HepG2 (cell line): ENCODE measurements at regions of chr4 and their contacts with region 1.

Region 1: GRCh38 chr4:54233277-54233696 is 4.2 kb downstream of the PDGFRA start:
- DNase-seq: peak; percentile 55
- ATAC-seq: peak; percentile 94
- H3K4me3 ChIP-seq: peak overlapping the region; percentile 45 to 75 (median 52); a peak in 5 of 6 replicates
- H3K27ac ChIP-seq: no peak overlapping the region
- H3K4me1 ChIP-seq: peaks cover 30% of the 10 kb centered on the region; the same call in 1 of the 2 replicates
- H3K27me3 ChIP-seq: peaks cover 14 to 45% of the 10 kb centered on the region in 2 experiments
- CTCF ChIP-seq: peak; percentile 93
- EP300 ChIP-seq: no peak
- POLR2A ChIP-seq: no peak
- RAD21 ChIP-seq: peak; percentile 97

Region 2: GRCh38 chr4:53313510-53313909 is 919.8 kb before region 1 on chr4:
- CTCF ChIA-PET with region 1: no interaction called
- POLR2A ChIA-PET with region 1: no interaction called
- in situ Hi-C with region 1: loop called (anchors 25 kb)
- intact Hi-C with region 1: no loop called
- DNase-seq: peak; percentile 43
- ATAC-seq: peak; percentile 86
- H3K4me3 ChIP-seq: no peak overlapping the region
- H3K27ac ChIP-seq: no peak overlapping the region
- H3K4me1 ChIP-seq: no peaks in the 10 kb centered on the region
- H3K27me3 ChIP-seq: no peaks in the 10 kb centered on the region
- CTCF ChIP-seq: peak; percentile 62
- EP300 ChIP-seq: no peak
- POLR2A ChIP-seq: no peak
- RAD21 ChIP-seq: no peak

Region 3: GRCh38 chr4:53490965-53491622 is 742.2 kb before region 1 on chr4:
- CTCF ChIA-PET with region 1: interaction called, 17 read pairs
- POLR2A ChIA-PET with region 1: no interaction called
- in situ Hi-C with region 1: loop called (anchors 25 kb)
- intact Hi-C with region 1: loop called (anchors 5 kb)
- DNase-seq: peak; percentile 40
- ATAC-seq: peak; percentile 75
- H3K4me3 ChIP-seq: no peak overlapping the region
- H3K27ac ChIP-seq: no peak overlapping the region
- H3K4me1 ChIP-seq: no peaks in the 10 kb centered on the region
- H3K27me3 ChIP-seq: no peaks in the 10 kb centered on the region; a peak in 1 of 5 replicates
- CTCF ChIP-seq: peak; percentile 59
- EP300 ChIP-seq: no peak
- POLR2A ChIP-seq: no peak
- RAD21 ChIP-seq: no peak

Region 4: DNA sequence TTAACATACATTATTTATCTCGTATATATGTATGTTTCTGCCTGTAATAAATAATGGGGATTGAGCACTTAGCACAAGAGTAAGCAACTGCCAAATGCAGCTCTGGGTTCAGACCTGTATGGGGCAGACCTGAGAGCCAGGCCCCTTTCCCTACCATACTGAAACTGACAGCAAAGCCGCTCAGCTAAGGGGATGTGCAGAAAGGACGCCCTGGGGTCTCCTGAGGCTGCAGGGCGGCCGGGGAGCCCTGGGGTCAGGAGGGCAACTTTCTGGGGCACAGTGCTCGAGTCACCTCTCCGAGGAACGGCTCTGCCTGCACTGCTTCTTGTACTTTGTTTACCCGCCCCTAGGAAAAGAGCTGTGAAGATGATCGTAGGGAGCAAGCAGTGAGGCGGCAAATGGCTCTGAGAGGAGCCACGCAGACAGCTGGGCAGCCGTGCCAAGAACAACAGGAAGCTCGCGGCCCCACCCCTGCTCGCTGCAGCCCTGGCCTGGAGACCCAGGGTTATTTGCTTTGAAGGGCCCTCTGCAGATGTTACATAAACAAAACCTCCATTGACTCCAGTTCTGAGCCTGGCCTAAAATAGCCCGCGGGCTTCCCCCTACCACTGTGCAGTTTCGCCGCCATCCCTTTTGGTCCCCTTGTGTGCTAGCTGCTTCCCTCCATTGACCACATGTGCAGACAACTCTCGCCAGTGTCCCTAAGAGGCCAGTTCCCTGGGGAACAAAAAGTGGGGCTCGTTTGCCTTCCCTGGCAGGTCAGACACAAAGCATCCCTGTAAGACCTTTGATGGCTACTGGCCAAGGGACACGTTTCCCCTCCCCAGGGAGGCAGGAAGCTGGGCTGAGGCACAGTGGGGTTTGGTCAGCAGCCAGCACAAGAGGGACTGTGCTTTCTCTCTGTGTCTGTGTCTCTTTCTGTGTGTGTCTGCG is 530.7 kb before region 1 on chr4:
- CTCF ChIA-PET with region 1: interaction called, 15 read pairs
- POLR2A ChIA-PET with region 1: no interaction called
- in situ Hi-C with region 1: loop called (anchors 5 kb)
- intact Hi-C with region 1: loop called (anchors 1 kb)
- DNase-seq: peak; percentile 63
- ATAC-seq: peak; percentile 90
- H3K4me3 ChIP-seq: peak overlapping the region; percentile 50 to 68 (median 56)
- H3K27ac ChIP-seq: no peak overlapping the region
- H3K4me1 ChIP-seq: peaks cover 27% of the 10 kb centered on the region
- H3K27me3 ChIP-seq: no peaks in the 10 kb centered on the region
- CTCF ChIP-seq: no peak
- EP300 ChIP-seq: no peak
- POLR2A ChIP-seq: no peak
- RAD21 ChIP-seq: no peak

Region 5: DNA sequence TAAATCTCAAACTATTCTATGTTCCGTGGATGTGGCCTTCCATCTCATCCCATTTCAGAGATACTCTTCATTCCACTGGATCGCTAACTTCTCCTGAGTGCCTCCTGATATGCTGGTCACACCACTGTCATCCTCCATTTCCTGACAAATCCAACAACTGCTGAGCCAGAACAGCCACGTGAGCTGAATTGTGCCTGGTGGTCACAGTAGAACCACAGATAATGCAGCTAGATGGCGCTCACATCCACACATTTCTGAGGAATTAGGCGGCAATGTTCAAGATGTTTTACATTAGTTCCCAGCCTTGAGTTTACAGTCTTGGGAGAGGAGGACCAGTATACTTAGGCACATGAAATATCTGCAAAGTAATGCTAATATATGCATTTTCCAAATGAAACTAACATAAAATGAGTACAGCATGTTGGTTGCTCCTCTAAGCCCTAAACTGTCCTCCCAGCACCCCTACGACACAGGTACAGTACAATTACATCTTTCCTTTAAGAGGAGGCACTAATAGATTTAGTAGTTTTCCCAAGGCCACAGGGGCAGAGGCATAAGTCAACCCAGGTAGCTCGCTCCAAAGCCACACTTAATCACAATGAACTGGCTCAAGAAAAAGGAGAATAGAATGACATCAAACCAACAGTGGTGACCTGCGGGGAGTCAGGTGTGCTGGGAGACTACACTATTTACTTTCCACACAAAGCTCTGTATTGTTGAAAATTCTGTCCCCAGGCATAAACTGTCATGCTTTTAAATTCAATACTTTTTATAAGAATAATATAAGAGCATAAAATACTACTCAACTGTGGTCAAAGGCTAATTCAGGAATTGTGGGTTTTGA is 303.1 kb before region 1 on chr4:
- CTCF ChIA-PET with region 1: interaction called, 16 read pairs
- POLR2A ChIA-PET with region 1: no interaction called
- in situ Hi-C with region 1: no loop called
- intact Hi-C with region 1: no loop called
- DNase-seq: peak; percentile 60
- ATAC-seq: peak; percentile 97
- H3K4me3 ChIP-seq: no peak overlapping the region
- H3K27ac ChIP-seq: no peak overlapping the region
- H3K4me1 ChIP-seq: peaks cover 14% of the 10 kb centered on the region
- H3K27me3 ChIP-seq: no peaks in the 10 kb centered on the region
- CTCF ChIP-seq: peak; percentile 92
- EP300 ChIP-seq: no peak
- POLR2A ChIP-seq: no peak
- RAD21 ChIP-seq: peak; percentile 56